ENCODE measurements at regions of chr2 and their contacts with region 1.

Region 1: DNA sequence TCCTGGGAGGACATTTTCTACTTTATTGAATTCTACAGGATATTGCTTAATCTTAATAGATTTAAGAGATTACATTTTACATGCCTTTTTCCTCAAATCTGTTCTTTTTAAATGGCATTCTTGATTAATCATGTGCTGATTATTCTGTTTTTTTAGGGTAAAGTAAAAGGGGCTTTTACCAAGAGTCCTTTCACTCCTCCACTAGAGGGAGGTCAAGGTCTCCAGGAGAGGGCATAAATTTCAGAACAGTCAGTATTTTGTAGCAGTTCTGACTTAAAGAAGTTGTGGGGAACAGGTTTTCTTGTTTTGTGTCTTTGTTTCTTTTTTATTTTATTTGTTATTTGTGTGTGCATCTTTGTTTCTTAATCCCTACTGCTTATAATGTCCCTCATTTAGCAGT is 25.4 kb downstream of the WDR75 start:
- DNase-seq: no peak
- H3K4me3 ChIP-seq: no peak overlapping the region
- H3K27ac ChIP-seq: no peak overlapping the region
- H3K27me3 ChIP-seq: no peaks in the 10 kb centered on the region
- CTCF ChIP-seq: peak; percentile 66

Region 2: GRCh38 chr2:189104926-189105325 is 361.7 kb before region 1 on chr2:
- in situ Hi-C with region 1: no loop called
- DNase-seq: no peak
- H3K4me3 ChIP-seq: no peak overlapping the region
- H3K27ac ChIP-seq: peak overlapping the region; percentile 46
- H3K27me3 ChIP-seq: no peaks in the 10 kb centered on the region
- CTCF ChIP-seq: no peak

Region 3: DNA sequence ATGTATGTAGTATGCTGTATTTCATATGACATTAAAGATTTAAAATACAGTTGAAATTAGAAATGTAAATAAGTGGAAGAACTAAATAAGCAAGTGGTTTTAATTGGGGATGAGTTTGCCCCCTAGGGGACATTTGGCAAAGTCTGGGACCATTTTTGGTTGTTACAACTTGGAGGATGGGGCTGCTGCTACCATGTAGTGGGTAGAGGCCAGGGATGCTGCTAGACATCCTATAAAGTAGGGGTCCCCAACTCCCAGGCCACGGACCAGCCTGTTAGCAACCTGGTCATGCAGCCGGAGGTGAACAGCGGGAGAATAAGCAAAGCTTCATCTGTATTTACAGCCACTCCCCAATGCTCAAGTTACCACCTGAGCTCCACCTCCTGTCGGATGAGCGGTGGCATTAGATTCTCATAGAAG is 166.7 kb after region 1 on chr2:
- in situ Hi-C with region 1: loop called (anchors 25 kb)
- DNase-seq: no peak
- H3K4me3 ChIP-seq: no peak overlapping the region
- H3K27ac ChIP-seq: no peak overlapping the region
- H3K27me3 ChIP-seq: no peaks in the 10 kb centered on the region
- CTCF ChIP-seq: peak; percentile 66

Measured in brain microvascular endothelial cell (primary cell).